Mammary epithelial cell (primary cell): ENCODE measurements at regions of chr1 and their contacts with region 1.

Region 1: GRCh38 chr1:151059078-151059907 is at the start of gene CDC42SE1:
- DNase-seq: peak; percentile 76
- H3K4me3 ChIP-seq: peak within 1 kb of the TSS; percentile 81 to 99 (median 81)
- H3K27ac ChIP-seq: peak within 1 kb of the TSS; percentile 73
- H3K4me1 ChIP-seq: peaks cover 37% of the 10 kb centered on the region
- H3K27me3 ChIP-seq: no peaks in the 10 kb centered on the region
- CTCF ChIP-seq: peak; percentile 61 to 83
- total RNA-seq, gene CDC42SE1: 112 to 160 TPM

Region 2: GRCh38 chr1:151001602-151002001 is 57.7 kb before region 1 on chr1:
- CTCF ChIA-PET with region 1: no interaction called
- dilution Hi-C with region 1: loop called (anchors 5 kb)
- in situ Hi-C with region 1: no loop called
- intact Hi-C with region 1: loop called (anchors 2 kb)
- DNase-seq: peak; percentile 28
- H3K4me3 ChIP-seq: no peak overlapping the region
- H3K27ac ChIP-seq: no peak overlapping the region
- H3K4me1 ChIP-seq: peaks cover 18% of the 10 kb centered on the region
- H3K27me3 ChIP-seq: no peaks in the 10 kb centered on the region
- CTCF ChIP-seq: no peak

Region 3: GRCh38 chr1:151024540-151025146 is 34.6 kb before region 1 on chr1:
- CTCF ChIA-PET with region 1: no interaction called
- dilution Hi-C with region 1: no loop called
- in situ Hi-C with region 1: no loop called
- intact Hi-C with region 1: loop called (anchors 1 kb)
- DNase-seq: peak; percentile 46
- H3K4me3 ChIP-seq: no peak overlapping the region
- H3K27ac ChIP-seq: no peak overlapping the region
- H3K4me1 ChIP-seq: no peaks in the 10 kb centered on the region
- H3K27me3 ChIP-seq: no peaks in the 10 kb centered on the region
- CTCF ChIP-seq: peak; percentile 77 to 86

Region 4: DNA sequence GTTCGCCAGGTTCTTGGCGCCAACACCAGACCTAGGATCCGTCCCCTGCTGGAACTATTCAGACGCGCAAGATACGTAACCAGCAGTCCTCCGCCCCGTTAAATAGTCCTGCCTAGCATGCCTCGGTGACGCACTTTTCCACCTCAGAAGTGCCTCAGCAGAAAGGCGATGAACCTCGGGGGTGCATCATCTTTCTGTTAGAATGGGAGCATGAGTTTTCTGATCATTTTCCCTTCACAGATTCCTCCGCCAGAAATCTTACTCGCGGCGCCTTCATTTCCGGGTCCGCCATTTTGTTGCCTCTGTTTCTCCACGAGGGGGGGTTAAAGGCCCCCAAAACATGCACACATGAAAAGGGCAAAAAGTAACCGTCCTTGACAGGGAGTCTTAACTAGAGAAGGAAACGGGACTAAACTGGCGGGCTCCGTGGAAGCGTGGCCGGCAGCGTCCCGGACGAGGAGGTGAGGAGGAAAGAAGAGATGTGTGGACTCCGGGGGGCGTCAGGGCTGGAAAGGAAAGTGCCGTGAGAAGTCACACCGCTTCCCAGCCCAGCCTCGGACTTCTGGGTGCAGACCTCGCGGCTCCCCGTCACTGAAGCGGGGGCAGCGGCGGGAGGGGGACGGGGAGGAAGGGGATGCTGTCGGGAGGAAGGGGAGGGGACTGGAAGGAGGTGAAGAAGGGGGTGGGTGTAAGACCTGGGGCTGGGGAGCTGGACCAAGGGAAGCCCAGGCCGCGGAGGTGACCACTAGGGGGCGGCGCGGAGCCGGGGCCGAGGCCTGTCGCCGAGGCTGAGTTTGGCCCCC is 11.4 kb after region 1 on chr1 and contains the start of gene GABPB2:
- CTCF ChIA-PET with region 1: interaction called, 3 read pairs
- dilution Hi-C with region 1: no loop called
- in situ Hi-C with region 1: no loop called
- intact Hi-C with region 1: loop called (anchors 1 kb)
- DNase-seq: peak; percentile 93
- H3K4me3 ChIP-seq: peak within 1 kb of the TSS; percentile 76 to 95 (median 84)
- H3K27ac ChIP-seq: peak within 1 kb of the TSS; percentile 91
- H3K4me1 ChIP-seq: peaks cover 12% of the 10 kb centered on the region
- H3K27me3 ChIP-seq: no peaks in the 10 kb centered on the region
- CTCF ChIP-seq: peak; percentile 62 to 94
- total RNA-seq, gene GABPB2: 9.2 to 10.7 TPM

Region 5: DNA sequence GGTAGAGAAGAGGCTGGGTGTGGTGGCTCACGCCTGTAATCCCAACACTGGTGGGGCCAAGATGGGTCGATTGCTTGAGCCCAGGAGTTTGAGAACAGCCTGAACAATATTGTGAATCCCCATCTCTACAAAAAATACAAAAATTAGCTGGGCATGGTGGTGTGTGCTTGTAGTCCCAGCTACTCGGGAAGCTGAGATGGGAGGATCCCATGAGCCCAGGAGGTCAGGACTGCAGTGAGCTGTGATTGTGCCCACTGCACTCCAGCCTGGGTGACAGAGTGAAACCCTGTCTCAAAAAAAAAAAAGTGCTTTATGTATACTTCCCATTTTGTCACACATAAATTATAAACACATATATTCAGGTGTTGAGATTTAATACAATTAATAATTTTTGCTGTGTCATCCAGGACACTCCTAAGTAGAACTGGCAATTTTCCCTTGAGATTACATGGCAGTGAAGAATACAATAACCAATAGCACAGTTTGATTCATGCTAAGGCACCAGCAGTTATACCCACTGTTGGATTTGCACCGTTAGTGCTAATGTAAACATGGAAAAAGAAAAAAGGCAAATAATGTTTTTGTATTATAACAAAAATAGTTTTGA is 26.8 kb after region 1 on chr1:
- CTCF ChIA-PET with region 1: no interaction called
- dilution Hi-C with region 1: no loop called
- in situ Hi-C with region 1: no loop called
- intact Hi-C with region 1: no loop called
- DNase-seq: no peak
- H3K4me3 ChIP-seq: no peak overlapping the region
- H3K27ac ChIP-seq: no peak overlapping the region
- H3K4me1 ChIP-seq: no peaks in the 10 kb centered on the region
- H3K27me3 ChIP-seq: no peaks in the 10 kb centered on the region
- CTCF ChIP-seq: no peak

Region 6: DNA sequence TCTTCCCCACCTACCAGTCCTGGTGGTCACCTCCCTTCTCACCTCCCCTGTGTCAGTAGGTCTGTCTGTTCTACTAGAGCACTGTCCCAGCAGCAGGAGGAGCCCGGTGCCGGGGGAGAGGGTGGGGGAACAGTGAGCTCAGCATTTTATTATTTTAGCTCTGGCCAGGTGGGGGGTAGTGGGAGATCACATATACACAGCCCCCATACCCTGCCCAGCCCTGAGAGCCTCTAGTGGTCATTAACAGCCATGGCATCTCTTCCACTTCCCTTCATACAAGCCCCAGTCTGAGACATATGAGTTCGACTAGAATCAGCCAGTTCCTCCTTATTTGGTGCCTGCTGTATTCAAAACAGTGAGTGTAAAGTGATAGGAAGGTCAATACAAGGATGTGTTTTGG is 116.6 kb after region 1 on chr1 and contains the start of gene TMOD4:
- CTCF ChIA-PET with region 1: no interaction called
- dilution Hi-C with region 1: no loop called
- in situ Hi-C with region 1: no loop called
- intact Hi-C with region 1: no loop called
- DNase-seq: no peak
- H3K4me3 ChIP-seq: no peak within 1 kb of the TSS
- H3K27ac ChIP-seq: no peak within 1 kb of the TSS
- H3K4me1 ChIP-seq: peaks cover 11% of the 10 kb centered on the region
- H3K27me3 ChIP-seq: no peaks in the 10 kb centered on the region
- CTCF ChIP-seq: peak; percentile 49 to 52
- total RNA-seq, gene TMOD4: not detected

Region 7: GRCh38 chr1:151756291-151756690 is 697.0 kb after region 1 on chr1:
- CTCF ChIA-PET with region 1: no interaction called
- dilution Hi-C with region 1: no loop called
- in situ Hi-C with region 1: no loop called
- intact Hi-C with region 1: no loop called
- DNase-seq: peak; percentile 40
- H3K4me3 ChIP-seq: no peak overlapping the region
- H3K27ac ChIP-seq: no peak overlapping the region
- H3K4me1 ChIP-seq: peaks cover 15% of the 10 kb centered on the region
- H3K27me3 ChIP-seq: no peaks in the 10 kb centered on the region
- CTCF ChIP-seq: no peak